B cell (primary cell): ENCODE measurements at regions of chr2 and their contacts with region 1.

Region 1: DNA sequence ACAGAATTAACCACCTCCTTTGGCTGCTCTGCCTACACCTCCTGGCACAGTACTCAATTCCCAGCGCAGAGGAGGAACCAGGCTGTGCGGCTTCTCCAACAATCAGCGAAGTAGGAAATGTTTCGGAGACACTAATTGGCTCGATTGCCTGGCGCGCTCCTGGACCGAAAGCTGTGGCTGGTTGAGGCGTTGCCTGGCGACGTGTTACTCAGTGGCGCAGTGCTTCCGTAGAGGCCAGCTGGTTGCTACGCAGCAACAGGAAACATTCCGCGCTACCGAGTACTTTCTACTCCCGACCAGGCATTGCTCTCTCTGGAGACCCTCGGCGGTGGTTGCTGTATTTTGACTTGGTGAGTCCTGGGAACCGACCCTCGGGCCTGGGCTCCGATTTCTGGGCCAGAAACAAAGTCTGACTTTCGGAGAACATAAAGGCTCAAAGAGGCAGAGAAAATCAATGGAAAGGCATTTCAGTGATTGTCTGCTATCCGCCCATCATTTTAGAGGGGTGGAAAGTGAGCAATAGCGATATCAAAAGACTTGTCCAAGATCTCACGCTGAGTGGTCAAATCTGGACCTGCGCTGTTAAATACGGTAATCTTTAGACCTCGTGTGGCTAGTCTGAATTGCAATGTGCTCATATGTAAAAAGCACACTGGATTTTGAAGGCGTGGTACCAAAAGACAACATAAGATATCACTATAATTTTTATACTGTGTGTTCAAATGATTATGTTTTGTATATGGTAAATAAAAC is at the start of gene DNAH6:
- DNase-seq: peak; percentile 88
- ATAC-seq: peak; percentile 98
- H3K4me3 ChIP-seq: peak within 1 kb of the TSS; percentile 14 to 64 (median 45)
- H3K4me3 Mint-ChIP-seq: peak within 1 kb of the TSS; percentile 86
- H3K27ac ChIP-seq: no peak within 1 kb of the TSS
- H3K27ac Mint-ChIP-seq: peak within 1 kb of the TSS; percentile 70
- H3K4me1 ChIP-seq: peaks cover 4 to 9% of the 10 kb centered on the region in 2 donors
- H3K4me1 Mint-ChIP-seq: peaks cover 12% of the 10 kb centered on the region
- H3K27me3 ChIP-seq: peaks cover 0 to 14% (median 11%) of the 10 kb centered on the region in 4 experiments
- H3K27me3 Mint-ChIP-seq: peaks cover 17% of the 10 kb centered on the region
- CTCF ChIP-seq: no peak
- total RNA-seq, gene DNAH6: 1.9 TPM in 2 replicates

Region 2: DNA sequence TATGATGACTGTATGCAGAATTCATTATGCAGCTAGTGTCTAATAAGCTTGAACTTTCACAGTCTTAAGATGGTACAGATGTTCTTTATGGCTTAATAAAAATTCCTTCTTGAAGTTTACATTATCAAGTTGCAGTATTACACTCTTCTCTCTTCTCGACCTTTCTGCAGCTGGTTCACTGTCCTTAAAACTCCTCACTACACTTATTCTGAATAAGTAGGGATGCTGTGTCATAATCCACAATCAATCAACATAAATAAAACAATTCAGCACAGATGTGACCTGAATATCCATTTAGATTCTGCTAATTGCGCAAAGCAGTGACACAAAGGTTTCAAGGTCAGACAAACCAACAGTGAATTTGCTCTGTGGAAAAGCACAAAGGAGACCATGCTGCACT is 414.1 kb before region 1 on chr2:
- CTCF ChIA-PET with region 1: no interaction called
- POLR2A ChIA-PET with region 1: no interaction called
- intact Hi-C with region 1: no loop called
- DNase-seq: no peak
- ATAC-seq: no peak
- H3K4me3 ChIP-seq: no peak overlapping the region
- H3K4me3 Mint-ChIP-seq: no peak overlapping the region
- H3K27ac ChIP-seq: no peak overlapping the region
- H3K27ac Mint-ChIP-seq: no peak overlapping the region
- H3K4me1 ChIP-seq: no peaks in the 10 kb centered on the region
- H3K4me1 Mint-ChIP-seq: no peaks in the 10 kb centered on the region
- H3K27me3 ChIP-seq: no peaks in the 10 kb centered on the region
- H3K27me3 Mint-ChIP-seq: no peaks in the 10 kb centered on the region
- CTCF ChIP-seq: no peak

Region 3: GRCh38 chr2:84459018-84459943 is 57.1 kb before region 1 on chr2 and contains the start of gene SUCLG1:
- CTCF ChIA-PET with region 1: no interaction called
- POLR2A ChIA-PET with region 1: no interaction called
- intact Hi-C with region 1: loop called (anchors 2 kb)
- DNase-seq: peak; percentile 94
- ATAC-seq: peak; percentile 97
- H3K4me3 ChIP-seq: peak within 1 kb of the TSS; percentile 67 to 95 (median 91)
- H3K4me3 Mint-ChIP-seq: peak within 1 kb of the TSS; percentile 93
- H3K27ac ChIP-seq: peak within 1 kb of the TSS; percentile 84 to 93
- H3K27ac Mint-ChIP-seq: peak within 1 kb of the TSS; percentile 97
- H3K4me1 ChIP-seq: peaks cover 20 to 23% of the 10 kb centered on the region in 2 donors
- H3K4me1 Mint-ChIP-seq: peaks cover 37% of the 10 kb centered on the region
- H3K27me3 ChIP-seq: no peaks in the 10 kb centered on the region
- H3K27me3 Mint-ChIP-seq: no peaks in the 10 kb centered on the region
- CTCF ChIP-seq: no peak
- total RNA-seq, gene SUCLG1: 31.8 and 33.6 TPM in 2 replicates